MCF 10A (cell line): ENCODE measurements at regions of chr1 and their contacts with region 1.

Region 1: GRCh38 chr1:85109475-85109874 is 61.2 kb upstream of the MCOLN3 start:
- DNase-seq: peak; percentile 65
- H3K4me3 Mint-ChIP-seq: no peak overlapping the region
- H3K27ac Mint-ChIP-seq: no peak overlapping the region
- H3K4me1 Mint-ChIP-seq: no peaks in the 10 kb centered on the region
- H3K27me3 Mint-ChIP-seq: no peaks in the 10 kb centered on the region
- CTCF ChIP-seq: peak; percentile 93

Region 2: DNA sequence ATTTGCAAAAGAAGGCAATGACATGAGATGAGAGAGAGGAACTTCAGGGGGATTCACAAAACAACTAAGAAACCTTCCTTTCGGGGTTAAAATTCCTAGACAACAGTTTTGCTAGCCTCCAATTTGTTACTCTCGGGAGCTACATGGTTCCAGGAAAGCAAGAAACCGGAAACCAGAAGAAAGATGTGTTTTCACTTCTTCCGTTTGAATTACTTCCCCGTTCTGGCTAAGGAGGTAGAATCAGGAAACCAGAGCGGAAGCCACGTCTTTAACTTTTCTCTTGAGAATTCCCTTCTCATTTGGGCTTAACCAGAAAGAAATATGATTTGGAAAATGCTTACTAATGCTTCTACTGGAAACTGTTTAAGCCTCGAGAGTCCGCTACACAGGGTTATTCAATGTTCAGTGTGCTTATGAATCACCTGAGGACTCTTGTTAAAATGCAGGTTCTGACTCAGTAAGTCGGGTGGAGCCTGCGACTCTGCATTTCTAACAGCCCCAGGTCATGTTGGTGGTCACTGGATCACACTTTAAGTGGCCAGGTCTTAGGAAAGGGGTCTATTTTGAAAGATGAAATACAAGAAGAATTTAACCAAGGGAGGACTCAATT is 17.7 kb before region 1 on chr1:
- CTCF ChIA-PET with region 1: interaction called, 20 read pairs
- POLR2A ChIA-PET with region 1: interaction called, 4 read pairs
- intact Hi-C with region 1: no loop called
- DNase-seq: peak; percentile 39
- H3K4me3 Mint-ChIP-seq: no peak overlapping the region
- H3K27ac Mint-ChIP-seq: peak overlapping the region; percentile 46
- H3K4me1 Mint-ChIP-seq: peaks cover 11% of the 10 kb centered on the region
- H3K27me3 Mint-ChIP-seq: no peaks in the 10 kb centered on the region
- CTCF ChIP-seq: no peak

Region 3: DNA sequence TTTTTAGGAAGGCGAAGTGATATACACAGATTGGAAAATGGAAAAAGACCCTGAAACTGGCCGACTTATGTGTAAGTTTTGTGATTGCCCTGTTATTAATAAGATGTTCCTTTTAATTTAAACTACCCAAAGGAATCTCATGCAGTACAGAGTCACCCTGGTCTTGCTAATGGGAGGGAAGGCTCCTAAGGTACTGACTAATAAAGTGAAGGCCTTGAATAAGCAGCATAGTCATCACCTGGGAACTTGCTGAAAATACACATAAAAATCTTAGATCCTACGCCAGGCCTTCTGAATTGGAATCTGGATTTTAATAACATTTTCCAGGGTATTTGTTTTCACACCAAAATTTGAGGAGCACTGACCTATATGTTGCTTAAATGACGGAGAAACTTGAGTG is 12.3 kb after region 1 on chr1:
- CTCF ChIA-PET with region 1: interaction called, 10 read pairs
- POLR2A ChIA-PET with region 1: no interaction called
- intact Hi-C with region 1: no loop called
- DNase-seq: no peak
- H3K4me3 Mint-ChIP-seq: no peak overlapping the region
- H3K27ac Mint-ChIP-seq: no peak overlapping the region
- H3K4me1 Mint-ChIP-seq: no peaks in the 10 kb centered on the region
- H3K27me3 Mint-ChIP-seq: no peaks in the 10 kb centered on the region
- CTCF ChIP-seq: no peak

Region 4: GRCh38 chr1:85134576-85135395 is 25.3 kb after region 1 on chr1:
- CTCF ChIA-PET with region 1: interaction called, 15 read pairs
- POLR2A ChIA-PET with region 1: no interaction called
- intact Hi-C with region 1: no loop called
- DNase-seq: peak; percentile 72
- H3K4me3 Mint-ChIP-seq: no peak overlapping the region
- H3K27ac Mint-ChIP-seq: no peak overlapping the region
- H3K4me1 Mint-ChIP-seq: no peaks in the 10 kb centered on the region
- H3K27me3 Mint-ChIP-seq: no peaks in the 10 kb centered on the region
- CTCF ChIP-seq: no peak

Region 5: DNA sequence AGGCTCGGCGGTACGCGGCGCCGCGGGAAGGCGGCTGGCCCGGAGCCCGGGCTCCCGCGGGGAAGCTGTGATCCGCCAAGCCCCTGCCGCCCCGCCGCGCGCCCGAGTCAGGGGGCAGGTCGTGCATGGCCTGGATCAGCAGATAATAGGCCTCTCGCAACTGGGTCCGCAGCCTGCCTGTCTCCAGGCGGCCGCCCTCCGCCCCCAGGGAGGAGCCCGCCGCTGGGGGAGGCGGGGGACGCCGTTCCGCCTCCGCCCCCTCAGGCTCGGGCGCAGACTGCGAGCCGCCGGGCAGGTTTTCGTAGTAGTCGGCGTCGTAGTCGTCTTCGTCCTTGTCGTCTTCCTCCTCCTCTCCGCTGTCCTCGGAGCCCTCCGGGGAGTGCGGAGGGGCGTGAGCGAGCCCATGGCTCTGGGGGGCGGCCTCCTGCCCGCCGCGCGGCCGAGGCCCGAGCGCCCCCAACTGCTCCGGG is 91.4 kb after region 1 on chr1 and contains the start of gene SYDE2:
- CTCF ChIA-PET with region 1: interaction called, 10 read pairs
- POLR2A ChIA-PET with region 1: interaction called, 5 read pairs
- intact Hi-C with region 1: no loop called
- DNase-seq: peak; percentile 79
- H3K4me3 Mint-ChIP-seq: peak within 1 kb of the TSS; percentile 93
- H3K27ac Mint-ChIP-seq: peak within 1 kb of the TSS; percentile 76
- H3K4me1 Mint-ChIP-seq: peaks cover 14% of the 10 kb centered on the region
- H3K27me3 Mint-ChIP-seq: no peaks in the 10 kb centered on the region
- CTCF ChIP-seq: no peak
- total RNA-seq, gene SYDE2: 4.3 and 5.9 TPM in 2 replicates

Region 6: GRCh38 chr1:85240174-85240601 is 130.7 kb after region 1 on chr1:
- CTCF ChIA-PET with region 1: interaction called, 21 read pairs
- POLR2A ChIA-PET with region 1: interaction called, 6 read pairs
- intact Hi-C with region 1: loop called (anchors 1 kb)
- DNase-seq: peak; percentile 46
- H3K4me3 Mint-ChIP-seq: no peak overlapping the region
- H3K27ac Mint-ChIP-seq: no peak overlapping the region
- H3K4me1 Mint-ChIP-seq: peaks cover 11% of the 10 kb centered on the region
- H3K27me3 Mint-ChIP-seq: no peaks in the 10 kb centered on the region
- CTCF ChIP-seq: peak; percentile 40

Region 7: DNA sequence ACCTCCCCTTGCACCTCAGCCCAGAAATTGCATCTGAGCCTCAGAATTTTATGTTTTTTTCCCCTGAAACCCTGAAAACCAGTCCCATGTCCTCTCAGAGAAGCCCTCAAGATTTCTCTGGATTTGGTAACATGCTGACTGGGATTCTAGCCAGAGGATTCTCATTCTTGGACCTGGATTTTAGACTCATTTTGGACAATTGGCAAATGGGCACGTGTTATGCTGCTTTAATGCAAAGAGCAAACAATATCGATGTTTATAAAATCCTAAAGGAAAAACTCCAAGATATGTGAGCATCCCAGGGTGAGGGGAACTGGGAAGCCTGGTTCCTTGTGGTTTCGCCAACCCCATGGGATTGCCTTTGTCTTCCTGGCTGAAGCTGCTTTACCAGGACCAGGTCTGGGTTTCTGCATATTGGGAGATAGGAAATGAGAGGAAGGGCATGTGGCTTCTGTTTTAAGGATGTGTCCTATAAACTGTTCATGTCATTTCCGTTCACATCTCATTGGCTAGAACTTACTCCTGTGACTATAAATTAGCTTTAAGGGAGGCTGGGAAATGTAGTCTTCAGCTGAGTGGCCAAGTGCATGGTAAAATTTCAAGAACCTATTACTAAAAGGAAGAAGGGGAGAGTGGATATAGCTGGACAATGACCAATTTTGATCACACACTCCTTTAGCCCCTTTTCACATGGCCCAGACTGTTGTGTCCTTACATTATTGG is 194.1 kb after region 1 on chr1:
- CTCF ChIA-PET with region 1: no interaction called
- POLR2A ChIA-PET with region 1: no interaction called
- intact Hi-C with region 1: no loop called
- DNase-seq: no peak
- H3K4me3 Mint-ChIP-seq: no peak overlapping the region
- H3K27ac Mint-ChIP-seq: no peak overlapping the region
- H3K4me1 Mint-ChIP-seq: peaks cover 3% of the 10 kb centered on the region
- H3K27me3 Mint-ChIP-seq: no peaks in the 10 kb centered on the region
- CTCF ChIP-seq: no peak